Caco-2 (cell line): ENCODE measurements at regions of chr11 and their contacts with region 1.

Region 1: GRCh38 chr11:45655347-45655756 is 10.1 kb downstream of the CHST1 start:
- DNase-seq: peak; percentile 68 to 81
- H3K4me3 ChIP-seq: no peak overlapping the region
- H3K4me3 Mint-ChIP-seq: no peak overlapping the region
- H3K27ac Mint-ChIP-seq: no peak overlapping the region
- H3K4me1 ChIP-seq: no peaks in the 10 kb centered on the region
- H3K4me1 Mint-ChIP-seq: no peaks in the 10 kb centered on the region
- H3K27me3 ChIP-seq: peaks cover 5% of the 10 kb centered on the region
- H3K27me3 Mint-ChIP-seq: peaks cover 29% of the 10 kb centered on the region
- CTCF ChIP-seq: peak; percentile 82 to 97

Region 2: DNA sequence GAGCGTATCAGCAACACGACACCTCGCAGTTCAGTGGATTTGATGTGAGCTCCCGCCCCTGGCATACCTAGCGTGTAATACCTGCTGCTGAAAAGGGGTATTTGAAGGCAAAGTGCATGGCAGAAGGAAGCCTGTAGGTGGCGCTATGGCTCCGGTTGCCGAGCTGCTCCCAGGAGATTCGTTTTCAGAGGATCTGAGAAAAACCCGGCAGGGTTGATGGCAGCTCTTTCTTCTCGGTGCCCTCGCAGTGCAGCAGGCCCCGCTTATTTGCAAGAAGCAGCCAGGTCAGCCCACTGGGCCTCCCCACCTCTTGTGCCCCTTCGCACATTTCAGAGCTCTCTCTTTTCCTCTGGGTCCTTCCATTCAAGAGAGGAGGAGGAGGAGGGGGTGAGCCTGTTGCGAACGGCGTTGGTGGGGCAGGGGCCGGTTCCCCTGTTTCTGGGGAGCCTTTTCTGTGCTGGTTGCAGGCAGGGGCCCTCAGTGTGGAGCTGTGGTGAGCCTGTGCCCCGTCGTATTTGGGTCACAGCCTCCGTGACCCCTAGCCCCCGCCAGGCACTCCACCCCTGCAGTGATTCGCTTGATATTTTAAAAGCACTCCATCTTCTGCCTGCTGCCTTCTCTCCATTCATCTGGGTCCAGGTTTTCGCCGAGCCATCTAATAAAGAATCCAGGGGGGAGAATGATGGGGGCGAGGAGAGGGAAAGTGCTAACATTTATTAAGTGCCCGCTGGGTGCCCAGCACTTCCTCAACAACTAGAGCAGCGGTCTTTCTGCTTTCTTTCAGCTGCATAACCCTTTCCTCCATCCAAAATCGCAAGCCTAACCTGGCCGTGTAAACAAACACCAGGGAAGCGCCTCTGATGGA is 283.9 kb before region 1 on chr11:
- CTCF ChIA-PET with region 1: interaction called, 36 read pairs
- POLR2A ChIA-PET with region 1: no interaction called
- intact Hi-C with region 1: loop called (anchors 1 kb)
- DNase-seq: peak; percentile 72 to 79
- H3K4me3 ChIP-seq: no peak overlapping the region
- H3K4me3 Mint-ChIP-seq: no peak overlapping the region
- H3K27ac Mint-ChIP-seq: no peak overlapping the region
- H3K4me1 ChIP-seq: no peaks in the 10 kb centered on the region
- H3K4me1 Mint-ChIP-seq: no peaks in the 10 kb centered on the region
- H3K27me3 ChIP-seq: peaks cover 1% of the 10 kb centered on the region
- H3K27me3 Mint-ChIP-seq: peaks cover 30% of the 10 kb centered on the region
- CTCF ChIP-seq: peak; percentile 92 to 97

Region 3: GRCh38 chr11:45698777-45699497 is 43.6 kb after region 1 on chr11:
- CTCF ChIA-PET with region 1: no interaction called
- POLR2A ChIA-PET with region 1: no interaction called
- intact Hi-C with region 1: no loop called
- DNase-seq: no peak
- H3K4me3 ChIP-seq: no peak overlapping the region
- H3K4me3 Mint-ChIP-seq: no peak overlapping the region
- H3K27ac Mint-ChIP-seq: no peak overlapping the region
- H3K4me1 ChIP-seq: no peaks in the 10 kb centered on the region
- H3K4me1 Mint-ChIP-seq: no peaks in the 10 kb centered on the region
- H3K27me3 ChIP-seq: no peaks in the 10 kb centered on the region
- H3K27me3 Mint-ChIP-seq: peaks cover 31% of the 10 kb centered on the region
- CTCF ChIP-seq: no peak